Ovary (tissue), 10 donors: ENCODE measurements at regions of chr20 and their contacts with region 1.

Region 1: DNA sequence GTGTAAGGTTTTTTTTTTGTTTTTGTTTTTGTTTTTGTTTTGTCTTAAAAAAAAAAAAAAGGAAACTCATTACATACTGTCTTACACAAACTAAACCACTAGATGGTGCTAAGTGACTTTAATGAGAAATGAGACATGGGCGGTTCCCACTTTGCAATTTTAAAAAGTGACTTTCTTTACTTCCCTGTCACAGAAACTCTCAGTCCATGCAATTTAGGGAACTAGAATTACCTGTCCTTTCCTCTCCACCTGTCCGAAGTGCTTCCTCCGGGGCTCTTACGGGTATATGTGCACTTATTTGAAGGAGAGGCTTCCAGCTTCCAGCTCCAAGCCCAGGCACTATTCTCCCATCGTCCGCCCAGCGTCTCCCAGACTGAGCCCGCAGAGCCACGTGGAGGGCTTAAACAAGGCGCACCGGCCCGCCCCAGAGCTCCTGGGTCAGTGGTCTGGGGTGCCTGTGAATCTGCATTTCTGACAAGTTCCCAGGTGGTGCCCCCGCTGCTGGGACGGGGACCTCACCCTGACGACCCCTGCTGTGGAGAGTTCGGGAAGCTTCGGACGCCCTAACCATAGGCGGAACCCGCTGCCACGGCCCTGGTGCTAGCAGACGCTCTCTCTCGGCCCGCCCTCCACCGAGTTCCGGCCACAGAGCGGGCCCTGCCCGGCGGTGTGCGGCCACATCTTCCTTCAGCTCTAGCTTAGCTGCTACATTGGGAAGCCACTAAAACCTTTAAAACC is 26.1 kb downstream of the BFSP1 start:
- DNase-seq: peak; percentile 46 to 75 (median 58)
- H3K4me3 ChIP-seq: peak overlapping the region; percentile 42
- H3K27ac ChIP-seq: peak overlapping the region in 1 of 2 donors; percentile 6
- H3K4me1 ChIP-seq: peaks cover 2% of the 10 kb centered on the region
- H3K27me3 ChIP-seq: no peaks in the 10 kb centered on the region
- CTCF ChIP-seq: peak; percentile 54 to 73 (median 71)
- EP300 ChIP-seq: no peak
- POLR2A ChIP-seq: no peak

Region 2: GRCh38 chr20:17904027-17904426 is 399.0 kb after region 1 on chr20:
- intact Hi-C with region 1: loop called in 3 of 4 experiments (anchors 5 to 10 kb)
- DNase-seq: no peak
- H3K4me3 ChIP-seq: no peak overlapping the region
- H3K27ac ChIP-seq: no peak overlapping the region
- H3K4me1 ChIP-seq: no peaks in the 10 kb centered on the region
- H3K27me3 ChIP-seq: no peaks in the 10 kb centered on the region
- CTCF ChIP-seq: no peak
- EP300 ChIP-seq: no peak
- POLR2A ChIP-seq: no peak

Region 3: GRCh38 chr20:17995967-17996819 is 491.1 kb after region 1 on chr20:
- intact Hi-C with region 1: loop called in 3 of 4 experiments (anchors 5 to 10 kb)
- DNase-seq: peak in 4 of 5 donors; percentile 28 to 40 (median 34)
- H3K4me3 ChIP-seq: no peak overlapping the region
- H3K27ac ChIP-seq: no peak overlapping the region
- H3K4me1 ChIP-seq: no peaks in the 10 kb centered on the region
- H3K27me3 ChIP-seq: no peaks in the 10 kb centered on the region
- CTCF ChIP-seq: peak; percentile 89 to 97 (median 90)
- EP300 ChIP-seq: no peak
- POLR2A ChIP-seq: no peak